Activated CD4-positive, alpha-beta memory T cell treated with anti-CD3 and anti-CD28 coated beads, Interleukin-2, amount 10 ng/mL, durations not matched to agents 7 days and 5 days (primary cell): ENCODE measurements at regions of chr5 and their contacts with region 1.

Region 1: DNA sequence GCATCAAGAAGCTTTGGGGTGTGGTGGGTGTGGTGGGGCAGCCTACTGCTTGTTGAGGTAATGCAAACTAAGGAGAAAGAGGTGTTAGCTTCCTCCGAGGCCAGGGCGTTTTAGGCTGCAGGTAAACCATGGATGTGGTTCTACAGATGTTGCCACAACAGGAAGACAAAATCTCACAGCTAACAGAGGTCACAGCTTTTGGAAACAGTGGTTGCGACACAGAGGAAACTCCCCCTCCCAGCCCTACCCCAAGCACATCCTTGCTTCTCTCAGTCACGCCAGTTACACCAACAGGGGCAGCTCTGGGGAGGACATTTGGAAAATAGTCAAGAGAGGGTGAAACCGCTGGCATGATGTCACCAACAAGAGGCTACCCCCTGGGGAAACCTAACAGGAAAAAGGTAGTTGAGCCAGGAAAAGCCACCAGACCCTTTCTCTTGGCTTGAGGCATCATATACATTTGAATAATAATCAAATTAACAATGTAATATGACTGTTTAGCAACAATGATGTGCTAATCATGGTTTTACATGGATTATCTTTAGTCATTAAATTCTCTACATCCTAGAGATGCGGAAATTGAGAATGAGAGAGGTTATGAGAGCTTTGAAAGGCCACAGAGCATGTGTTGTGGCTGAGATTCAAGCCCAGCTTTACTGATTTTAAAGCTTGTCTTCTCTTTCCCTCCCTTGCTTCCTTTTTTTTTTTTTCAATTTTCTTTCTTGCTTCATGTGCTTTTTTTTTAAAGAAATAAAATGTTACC is 82.2 kb upstream of the IL12B start:
- DNase-seq: peak; percentile 89
- H3K4me3 Mint-ChIP-seq: peak overlapping the region; percentile 34
- H3K27ac Mint-ChIP-seq: peak overlapping the region; percentile 88
- H3K4me1 Mint-ChIP-seq: peaks cover 65% of the 10 kb centered on the region
- H3K27me3 Mint-ChIP-seq: peaks cover 44% of the 10 kb centered on the region

Region 2: GRCh38 chr5:159240301-159240870 is 172.1 kb before region 1 on chr5:
- CTCF ChIA-PET with region 1: no interaction called
- POLR2A ChIA-PET with region 1: no interaction called
- DNase-seq: no peak
- H3K4me3 Mint-ChIP-seq: no peak overlapping the region
- H3K27ac Mint-ChIP-seq: no peak overlapping the region
- H3K4me1 Mint-ChIP-seq: peaks cover 16% of the 10 kb centered on the region
- H3K27me3 Mint-ChIP-seq: peaks cover 2% of the 10 kb centered on the region

Region 3: GRCh38 chr5:159331093-159331973 is 81.1 kb before region 1 on chr5:
- CTCF ChIA-PET with region 1: interaction called, 20 read pairs
- POLR2A ChIA-PET with region 1: interaction called, 115 read pairs
- DNase-seq: peak; percentile 83
- H3K4me3 Mint-ChIP-seq: peak overlapping the region; percentile 76
- H3K27ac Mint-ChIP-seq: peak overlapping the region; percentile 65
- H3K4me1 Mint-ChIP-seq: peaks cover 53% of the 10 kb centered on the region
- H3K27me3 Mint-ChIP-seq: peaks cover 30% of the 10 kb centered on the region

Region 4: DNA sequence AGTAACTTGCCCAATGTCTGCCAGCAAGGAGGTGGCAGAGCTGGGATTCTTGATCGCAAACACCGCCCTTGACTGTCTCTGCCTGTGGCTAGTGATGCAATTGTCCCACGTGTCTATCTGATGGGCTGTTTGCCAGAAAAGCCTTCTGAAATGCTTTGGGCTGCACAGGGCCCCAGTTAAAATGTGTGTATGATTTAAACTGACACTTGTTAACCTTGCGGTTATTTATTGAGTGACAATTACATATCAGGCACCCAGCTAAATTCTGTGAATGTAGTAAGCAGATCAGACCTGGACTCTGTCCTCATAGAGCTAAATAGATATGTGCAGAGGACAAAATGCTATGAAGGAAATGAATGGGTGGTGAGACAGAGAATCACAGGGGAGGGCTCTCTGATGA is 70.6 kb before region 1 on chr5:
- CTCF ChIA-PET with region 1: interaction called, 23 read pairs
- POLR2A ChIA-PET with region 1: interaction called, 115 read pairs
- DNase-seq: peak; percentile 78
- H3K4me3 Mint-ChIP-seq: no peak overlapping the region
- H3K27ac Mint-ChIP-seq: peak overlapping the region; percentile 87
- H3K4me1 Mint-ChIP-seq: peaks cover 85% of the 10 kb centered on the region
- H3K27me3 Mint-ChIP-seq: peaks cover 1% of the 10 kb centered on the region

Region 5: DNA sequence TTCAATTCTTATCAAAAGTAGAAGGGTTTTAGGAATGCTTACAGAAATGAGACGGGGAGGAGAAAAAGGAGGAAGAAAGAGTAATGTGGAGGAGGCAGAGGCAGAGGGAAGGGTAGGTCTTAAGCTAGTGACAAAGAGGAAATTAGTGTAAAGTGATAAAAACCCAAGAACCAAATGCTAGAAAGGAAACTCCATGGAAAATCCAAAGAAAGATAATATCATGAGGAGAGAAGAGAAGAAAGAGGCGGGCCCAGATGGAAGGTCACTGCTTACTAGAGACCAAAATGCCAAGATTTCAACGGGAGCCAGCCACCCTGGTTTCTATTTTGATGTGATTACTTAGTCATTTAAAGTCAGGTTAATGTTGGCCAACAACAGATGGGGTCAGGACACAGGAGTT is 13.5 kb before region 1 on chr5:
- CTCF ChIA-PET with region 1: interaction called, 11 read pairs
- POLR2A ChIA-PET with region 1: interaction called, 6 read pairs
- DNase-seq: no peak
- H3K4me3 Mint-ChIP-seq: no peak overlapping the region
- H3K27ac Mint-ChIP-seq: no peak overlapping the region
- H3K4me1 Mint-ChIP-seq: peaks cover under 1% of the 10 kb centered on the region
- H3K27me3 Mint-ChIP-seq: peaks cover 32% of the 10 kb centered on the region

Region 6: DNA sequence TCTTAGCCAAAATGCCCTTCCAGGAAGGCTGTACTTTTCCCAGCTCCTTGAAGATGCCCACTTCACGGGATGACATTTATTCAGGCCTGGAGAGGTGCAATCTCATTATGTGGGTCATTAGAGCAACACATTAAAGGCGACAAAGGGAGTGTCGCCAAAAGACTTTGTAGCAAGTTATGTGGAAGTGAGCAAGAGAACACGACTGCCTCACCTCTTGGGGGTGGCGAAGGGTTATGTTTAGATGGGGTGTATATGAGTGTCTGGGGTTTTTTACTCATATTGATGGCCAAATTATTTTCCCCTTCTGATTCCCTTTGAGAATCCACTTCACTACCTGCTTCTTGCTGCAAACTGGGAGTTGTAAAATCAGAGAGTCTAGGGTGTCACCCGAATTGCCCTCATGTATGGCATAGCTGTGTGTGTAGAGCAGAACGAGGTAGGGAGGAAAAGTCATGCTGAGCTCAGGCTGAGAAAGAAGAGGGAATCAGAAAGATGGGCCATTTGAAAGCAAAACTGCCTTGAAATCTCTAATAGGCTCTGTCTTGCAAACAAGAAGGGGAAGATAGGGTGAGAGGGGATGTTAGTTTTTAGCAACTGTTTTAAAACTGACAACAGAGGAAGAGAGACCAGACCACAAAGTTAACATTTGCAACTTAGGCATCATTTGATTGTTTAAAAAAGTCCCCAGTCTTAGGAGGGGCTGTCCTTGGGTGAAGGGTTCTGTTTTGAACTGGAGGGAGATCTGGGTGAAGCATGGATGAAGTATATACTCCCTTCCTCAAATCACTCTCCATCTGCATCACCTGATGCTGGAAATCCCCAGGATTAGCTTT is 14.9 kb after region 1 on chr5:
- CTCF ChIA-PET with region 1: interaction called, 8 read pairs
- POLR2A ChIA-PET with region 1: interaction called, 27 read pairs
- DNase-seq: no peak
- H3K4me3 Mint-ChIP-seq: no peak overlapping the region
- H3K27ac Mint-ChIP-seq: peak overlapping the region; percentile 66
- H3K4me1 Mint-ChIP-seq: peaks cover 54% of the 10 kb centered on the region
- H3K27me3 Mint-ChIP-seq: peaks cover 32% of the 10 kb centered on the region

Region 7: DNA sequence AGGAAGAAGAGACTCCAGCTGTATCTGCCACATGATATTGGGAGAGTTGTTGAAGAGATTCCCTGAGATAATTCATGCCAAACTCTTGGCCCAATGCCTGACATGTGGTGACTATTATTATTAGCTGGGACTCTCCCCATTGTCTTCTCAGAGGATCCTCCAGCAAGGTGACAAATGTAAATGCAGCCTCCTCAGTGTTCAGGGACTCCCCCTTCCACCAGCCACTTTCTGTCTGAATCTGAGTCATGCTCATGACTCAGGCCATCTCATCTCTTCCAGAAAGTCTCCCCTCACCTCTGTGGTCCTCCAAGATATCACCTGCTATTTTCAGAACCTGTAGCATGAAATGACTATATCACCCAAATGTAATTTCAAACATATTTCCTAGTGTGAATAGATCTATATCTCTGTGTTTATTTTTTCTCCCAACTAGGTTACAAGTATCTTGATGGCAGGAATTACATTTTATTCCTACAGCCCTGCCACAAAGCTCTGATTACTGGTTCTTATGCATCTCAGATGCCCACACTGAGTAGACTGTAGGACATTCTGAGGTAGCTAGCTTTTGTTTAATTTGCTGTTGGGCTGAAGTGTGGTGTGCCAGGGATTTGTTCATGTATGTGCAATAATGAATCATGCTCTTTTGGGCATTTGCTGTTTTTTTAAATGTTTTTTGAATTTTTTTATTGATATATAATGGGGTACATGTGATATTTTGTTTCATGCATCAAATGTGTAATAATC is 44.4 kb after region 1 on chr5:
- CTCF ChIA-PET with region 1: interaction called, 9 read pairs
- POLR2A ChIA-PET with region 1: interaction called, 19 read pairs
- DNase-seq: peak; percentile 66
- H3K4me3 Mint-ChIP-seq: no peak overlapping the region
- H3K27ac Mint-ChIP-seq: no peak overlapping the region
- H3K4me1 Mint-ChIP-seq: peaks cover 44% of the 10 kb centered on the region
- H3K27me3 Mint-ChIP-seq: peaks cover 73% of the 10 kb centered on the region

Region 8: DNA sequence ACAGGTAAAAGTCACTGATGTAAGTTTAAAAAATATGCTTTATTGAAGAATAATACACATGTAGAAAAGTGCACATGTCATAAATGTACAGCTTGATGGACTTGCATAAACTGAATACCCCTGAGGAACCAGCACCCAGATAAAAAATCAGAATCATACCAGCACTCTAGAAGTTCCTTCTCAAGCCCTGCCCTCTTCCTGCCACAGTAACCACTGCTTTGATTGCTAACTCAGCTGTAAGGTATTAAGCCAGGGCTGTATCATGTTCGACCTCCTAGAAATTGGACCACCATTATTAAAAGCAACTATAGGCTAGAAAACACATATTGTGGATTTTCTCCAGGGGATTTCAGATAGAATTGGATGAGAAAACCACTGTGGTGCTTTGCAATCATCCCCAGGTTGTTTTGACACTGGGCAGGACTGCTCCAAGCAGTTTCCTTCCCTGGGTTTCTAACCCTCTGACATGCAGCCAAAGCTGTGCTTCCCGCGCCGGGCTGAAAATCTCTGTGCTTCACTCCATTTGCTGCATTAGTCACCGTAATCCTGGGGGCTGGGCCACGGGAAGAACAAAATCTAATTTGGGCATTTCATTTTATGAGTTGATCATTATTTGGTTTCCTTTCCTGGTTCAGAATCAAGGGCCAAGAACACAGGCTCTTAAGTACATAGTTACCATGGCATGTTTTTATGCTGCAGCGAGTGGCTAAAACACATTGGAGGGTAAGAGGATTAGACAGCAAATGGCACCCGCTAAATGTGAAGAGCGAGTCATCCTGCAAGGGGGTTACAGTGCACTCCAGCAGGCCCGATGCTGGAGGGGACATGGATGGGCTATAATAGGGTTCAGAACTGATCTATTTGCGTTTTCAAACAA is 57.3 kb after region 1 on chr5:
- CTCF ChIA-PET with region 1: no interaction called
- POLR2A ChIA-PET with region 1: no interaction called
- DNase-seq: peak; percentile 53
- H3K4me3 Mint-ChIP-seq: no peak overlapping the region
- H3K27ac Mint-ChIP-seq: no peak overlapping the region
- H3K4me1 Mint-ChIP-seq: peaks cover 23% of the 10 kb centered on the region
- H3K27me3 Mint-ChIP-seq: peaks cover 49% of the 10 kb centered on the region

Region 9: DNA sequence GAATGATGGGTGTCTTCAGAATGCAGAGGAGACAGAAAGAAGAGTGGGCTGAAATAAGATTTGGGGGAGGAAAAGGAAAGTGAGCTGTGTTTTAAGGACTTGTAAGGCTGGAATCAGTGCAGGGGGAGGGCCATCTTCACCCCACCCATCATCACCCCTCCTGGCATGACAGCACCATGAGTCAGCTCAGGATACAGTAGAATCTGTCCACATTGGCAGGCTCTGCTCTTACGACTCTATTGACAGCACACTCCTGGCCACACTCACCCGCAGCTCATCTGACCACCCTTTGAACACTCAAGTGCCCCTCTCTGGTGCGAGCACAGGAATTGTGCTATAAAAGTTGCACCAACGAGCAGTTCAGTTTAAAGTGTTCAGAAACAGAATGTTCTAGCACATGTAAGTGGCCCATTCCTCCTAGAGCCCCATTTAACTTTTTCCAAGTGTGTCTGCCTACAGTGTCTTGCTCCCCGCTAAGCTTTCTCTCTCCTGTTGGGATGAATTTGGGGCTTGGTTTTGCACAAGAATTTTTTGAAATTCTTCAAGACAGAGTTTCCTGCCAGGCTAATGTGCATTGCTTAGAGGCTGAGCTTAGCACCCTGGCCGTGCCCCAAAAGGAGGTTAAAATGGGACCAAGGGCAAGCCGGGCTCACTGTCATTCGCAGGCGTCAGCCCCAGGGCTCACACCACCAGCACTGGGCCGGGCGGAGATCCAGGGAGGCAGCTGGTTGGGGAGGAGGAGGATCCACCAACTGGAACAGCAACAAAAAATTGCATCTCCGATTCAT is 515.9 kb after region 1 on chr5:
- CTCF ChIA-PET with region 1: no interaction called
- POLR2A ChIA-PET with region 1: no interaction called
- DNase-seq: no peak
- H3K4me3 Mint-ChIP-seq: no peak overlapping the region
- H3K27ac Mint-ChIP-seq: no peak overlapping the region
- H3K4me1 Mint-ChIP-seq: peaks cover 4% of the 10 kb centered on the region
- H3K27me3 Mint-ChIP-seq: peaks cover 45% of the 10 kb centered on the region